CD14-positive monocyte (primary cell): ENCODE measurements at regions of chr11 and their contacts with region 1.

Region 1: DNA sequence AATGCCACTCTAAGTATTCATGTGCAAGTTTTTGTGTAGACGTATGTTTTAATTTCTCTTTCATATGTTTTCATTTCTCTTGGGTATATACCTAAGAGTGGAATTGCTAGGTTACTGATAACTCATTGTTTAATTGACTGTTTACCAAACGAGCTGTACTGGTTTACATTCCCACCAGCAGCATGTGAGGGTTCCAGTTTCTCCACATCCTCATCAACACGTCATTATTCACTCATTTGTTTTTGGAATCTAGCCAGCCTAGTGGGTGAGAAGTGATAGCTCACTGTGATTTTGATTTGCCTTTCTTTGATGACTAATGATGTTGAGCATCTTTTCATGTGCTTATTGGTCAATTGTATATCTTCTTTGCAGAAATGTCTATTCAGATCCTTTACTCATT is 4.0 kb downstream of the ANKRD13D start:
- DNase-seq: peak; percentile 64 to 83 (median 73)
- H3K4me3 ChIP-seq: peak overlapping the region in 1 of 3 experiments; percentile 33
- H3K4me3 Mint-ChIP-seq: no peak overlapping the region
- H3K27ac ChIP-seq: peak overlapping the region in 1 of 2 donors; percentile 74
- H3K27ac Mint-ChIP-seq: peak overlapping the region in 6 of 7 donors; percentile 37 to 87 (median 74)
- H3K4me1 ChIP-seq: peaks cover 45 to 59% of the 10 kb centered on the region in 2 donors
- H3K4me1 Mint-ChIP-seq: peaks cover 52% of the 10 kb centered on the region
- H3K27me3 ChIP-seq: no peaks in the 10 kb centered on the region
- H3K27me3 Mint-ChIP-seq: peaks cover 0 to 1% (median 0%) of the 10 kb centered on the region in 3 donors
- CTCF ChIP-seq: no peak

Region 2: DNA sequence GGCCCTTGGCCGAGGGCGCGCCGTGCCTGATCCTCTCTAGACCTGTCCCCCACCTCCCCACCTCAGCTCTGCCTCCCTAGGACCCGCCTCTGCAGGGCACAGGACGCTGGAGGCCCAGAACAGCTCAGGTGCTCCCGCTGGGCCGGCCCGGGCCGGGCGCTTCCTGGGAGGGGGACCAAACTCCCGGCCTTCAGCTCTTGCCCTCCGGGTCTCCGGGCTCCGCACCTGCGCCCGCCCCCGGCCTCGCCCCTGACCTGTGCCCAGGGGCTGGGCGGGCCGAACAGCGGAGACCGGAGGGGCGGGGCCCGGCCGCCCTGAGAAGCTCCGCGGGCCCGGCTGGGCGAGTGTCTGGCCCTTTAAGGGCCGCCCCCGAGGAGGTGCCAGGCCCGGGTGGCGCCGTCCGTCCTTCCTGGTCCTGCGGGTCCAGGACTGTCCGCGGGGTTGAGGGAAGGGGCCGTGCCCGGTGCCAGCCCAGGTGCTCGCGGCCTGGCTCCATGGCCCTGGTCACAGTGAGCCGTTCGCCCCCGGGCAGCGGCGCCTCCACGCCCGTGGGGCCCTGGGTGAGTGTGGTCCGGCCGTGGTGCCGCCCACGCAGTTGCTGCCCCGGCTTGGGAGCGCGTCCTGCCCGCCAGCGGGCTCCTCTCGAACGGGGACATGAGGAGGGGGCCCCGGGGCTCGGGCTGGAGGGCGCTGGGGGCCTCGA is 10.2 kb after region 1 on chr11 and contains the start of gene SSH3:
- intact Hi-C with region 1: loop called in 1 of 2 experiments (anchors 1 kb)
- DNase-seq: peak in 2 of 3 donors; percentile 24 to 47
- H3K4me3 ChIP-seq: peak within 1 kb of the TSS; percentile 40 to 86 (median 66)
- H3K4me3 Mint-ChIP-seq: peak within 1 kb of the TSS; percentile 79 to 85
- H3K27ac ChIP-seq: peak within 1 kb of the TSS; percentile 64 to 78
- H3K27ac Mint-ChIP-seq: peak within 1 kb of the TSS; percentile 75 to 92 (median 89)
- H3K4me1 ChIP-seq: peaks cover 44 to 64% of the 10 kb centered on the region in 2 donors
- H3K4me1 Mint-ChIP-seq: peaks cover 52% of the 10 kb centered on the region
- H3K27me3 ChIP-seq: no peaks in the 10 kb centered on the region
- H3K27me3 Mint-ChIP-seq: no peaks in the 10 kb centered on the region
- CTCF ChIP-seq: no peak
- polyA plus RNA-seq, gene SSH3: 3.6 to 23.3 (median 5.8) TPM

Region 3: DNA sequence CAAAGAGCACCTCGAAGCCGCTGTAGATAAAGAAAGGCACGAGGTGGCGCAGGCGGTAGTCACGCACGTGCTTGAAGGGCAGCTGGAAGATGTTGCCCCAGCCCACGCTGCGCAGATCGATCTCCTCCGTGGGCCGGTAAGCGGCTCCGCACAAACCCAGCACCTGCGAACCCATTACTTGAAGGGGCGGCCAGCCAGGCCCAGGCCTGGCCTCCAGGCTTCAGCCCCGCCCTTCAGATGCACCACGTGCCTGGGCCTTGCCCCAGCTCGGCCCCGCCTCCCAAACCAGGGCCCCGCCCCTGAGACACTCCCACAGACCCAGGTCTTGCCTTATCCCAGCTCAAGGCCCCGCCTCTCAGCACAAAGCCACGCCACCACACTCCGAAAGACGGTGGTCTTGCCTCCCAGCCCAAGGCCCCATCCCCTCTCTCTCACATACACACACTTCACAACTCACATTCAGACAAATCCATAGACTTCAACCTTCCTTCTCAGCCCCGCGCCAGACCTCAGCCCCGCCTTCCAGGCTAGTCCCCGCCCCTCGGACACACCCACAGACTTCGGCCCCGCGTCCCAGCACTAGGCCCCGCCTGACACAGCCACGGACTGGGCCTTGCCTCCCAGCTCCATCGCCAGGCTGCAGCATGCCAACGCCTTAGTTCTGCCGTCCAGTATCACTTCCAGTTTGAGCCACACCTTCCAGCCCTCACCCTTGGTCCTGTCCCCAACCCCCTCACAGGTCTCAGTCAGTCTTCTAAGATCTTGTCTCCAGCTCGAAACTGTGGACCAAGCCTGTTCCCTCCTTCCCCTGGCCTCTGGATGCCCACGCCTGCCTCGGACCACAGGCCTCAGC is 703.8 kb after region 1 on chr11:
- intact Hi-C with region 1: no loop called
- DNase-seq: peak; percentile 82 to 89 (median 86)
- H3K4me3 ChIP-seq: peak overlapping the region in 1 of 3 experiments; percentile 68
- H3K4me3 Mint-ChIP-seq: peak overlapping the region; percentile 77 to 84
- H3K27ac ChIP-seq: peak overlapping the region; percentile 55 to 63
- H3K27ac Mint-ChIP-seq: peak overlapping the region; percentile 72 to 98 (median 94)
- H3K4me1 ChIP-seq: peaks cover 42 to 59% of the 10 kb centered on the region in 2 donors
- H3K4me1 Mint-ChIP-seq: peaks cover 51% of the 10 kb centered on the region
- H3K27me3 ChIP-seq: no peaks in the 10 kb centered on the region
- H3K27me3 Mint-ChIP-seq: peaks cover 0 to 2% (median 1%) of the 10 kb centered on the region in 3 donors
- CTCF ChIP-seq: no peak